ENCODE measurements at regions of chr5 and their contacts with region 1.

Region 1: DNA sequence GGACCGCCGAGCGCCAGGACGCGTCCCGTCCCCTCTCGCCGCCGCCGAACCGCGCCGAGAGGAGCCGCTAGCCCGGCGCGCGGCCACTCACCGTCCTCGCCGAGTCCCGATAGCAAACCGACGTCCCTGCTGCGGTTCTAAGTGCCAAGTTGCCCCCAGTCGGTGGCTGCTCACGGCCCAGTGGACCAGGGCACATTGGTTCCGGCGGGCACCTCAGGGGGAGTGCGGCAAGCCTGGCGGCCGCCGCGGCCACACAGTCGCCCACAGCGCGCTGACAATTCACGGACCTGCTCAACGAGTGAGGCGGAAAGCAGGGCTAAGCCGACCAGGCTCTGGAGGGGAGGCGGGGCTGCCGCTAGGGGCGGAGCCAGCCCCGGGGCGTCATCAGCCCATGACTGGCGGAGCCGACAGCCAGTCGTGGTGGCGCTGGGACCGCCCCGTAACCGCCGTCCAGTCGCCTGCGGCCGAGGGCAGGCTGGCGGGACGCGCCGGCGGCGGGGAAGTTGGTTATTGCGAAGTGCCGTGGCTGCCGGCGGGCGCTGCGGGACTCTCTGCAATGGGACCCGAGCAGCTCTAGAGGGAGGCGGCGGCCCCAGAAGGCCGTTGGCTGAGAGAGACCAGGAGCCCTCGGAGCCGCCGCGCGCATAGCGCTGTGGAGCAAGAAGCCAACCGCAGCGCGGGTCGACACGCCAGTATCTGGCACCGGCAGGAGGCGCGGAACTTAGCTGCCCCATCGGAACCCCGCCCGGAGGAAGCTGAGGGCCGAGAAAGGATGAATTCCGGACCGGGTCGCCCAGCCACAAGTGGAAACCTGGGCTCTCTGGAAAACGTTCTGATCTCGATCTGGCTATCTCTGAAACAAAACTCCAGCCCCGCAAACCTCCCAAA is at the start of gene MARCHF3:
- DNase-seq: peak; percentile 97 to 98 (median 98)
- ATAC-seq: peak; percentile 94
- H3K4me3 ChIP-seq: peak within 1 kb of the TSS; percentile 89
- H3K27ac ChIP-seq: peak within 1 kb of the TSS; percentile 89
- H3K4me1 ChIP-seq: peaks cover 26 to 31% of the 10 kb centered on the region in 2 experiments
- H3K27me3 ChIP-seq: no peaks in the 10 kb centered on the region
- CTCF ChIP-seq: peak; percentile 46 to 57 (median 49); a peak in 5 of 6 replicates
- EP300 ChIP-seq: no peak
- POLR2A ChIP-seq: peak; percentile 97
- RAD21 ChIP-seq: peak; percentile 5 to 33; a peak in 3 of 4 replicates
- polyA plus RNA-seq, gene MARCHF3: 5.6 to 7.6 TPM

Region 2: DNA sequence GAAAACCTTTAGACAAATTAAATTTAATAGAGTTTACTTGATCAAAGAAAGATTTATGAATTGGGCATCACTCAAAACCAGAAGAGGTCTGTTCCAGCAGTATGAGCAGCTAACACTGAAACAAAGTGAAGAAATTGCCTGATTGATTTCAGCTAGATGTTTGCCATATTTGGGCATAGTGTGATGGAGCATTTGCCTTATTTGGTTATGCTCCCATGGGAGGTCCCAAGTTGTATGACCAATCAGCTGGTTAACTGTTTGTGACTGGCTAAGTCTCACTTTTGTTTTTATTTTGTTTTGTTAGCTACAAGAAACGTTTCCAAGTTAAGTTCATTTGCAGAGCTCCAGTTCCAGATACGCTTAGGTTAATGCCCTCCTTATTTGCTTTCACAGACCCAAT is 306.9 kb before region 1 on chr5:
- CTCF ChIA-PET with region 1: no interaction called
- POLR2A ChIA-PET with region 1: no interaction called
- in situ Hi-C with region 1: no loop called
- intact Hi-C with region 1: no loop called
- DNase-seq: no peak
- ATAC-seq: peak; percentile 84
- H3K4me3 ChIP-seq: no peak overlapping the region
- H3K27ac ChIP-seq: no peak overlapping the region
- H3K4me1 ChIP-seq: peaks cover 0 to under 1% of the 10 kb centered on the region in 2 experiments; a peak in 1 of 5 replicates
- H3K27me3 ChIP-seq: no peaks in the 10 kb centered on the region
- CTCF ChIP-seq: no peak
- EP300 ChIP-seq: no peak
- POLR2A ChIP-seq: no peak
- RAD21 ChIP-seq: no peak

Region 3: GRCh38 chr5:126846344-126846743 is 184.2 kb before region 1 on chr5:
- CTCF ChIA-PET with region 1: no interaction called
- POLR2A ChIA-PET with region 1: no interaction called
- in situ Hi-C with region 1: no loop called
- intact Hi-C with region 1: loop called (anchors 5 kb)
- DNase-seq: peak in 1 of 4 experiments; percentile 30
- ATAC-seq: peak; percentile 56
- H3K4me3 ChIP-seq: no peak overlapping the region
- H3K27ac ChIP-seq: no peak overlapping the region
- H3K4me1 ChIP-seq: peaks cover 13 to 31% of the 10 kb centered on the region in 2 experiments; a peak in 4 of 5 replicates
- H3K27me3 ChIP-seq: no peaks in the 10 kb centered on the region
- CTCF ChIP-seq: peak; percentile 29 to 45 (median 38); a peak in 4 of 6 replicates
- EP300 ChIP-seq: no peak
- POLR2A ChIP-seq: no peak
- RAD21 ChIP-seq: peak; percentile 43 to 57

Region 4: GRCh38 chr5:126884269-126884819 is 146.2 kb before region 1 on chr5:
- CTCF ChIA-PET with region 1: no interaction called
- POLR2A ChIA-PET with region 1: interaction called, 4 read pairs
- in situ Hi-C with region 1: no loop called
- intact Hi-C with region 1: loop called (anchors 5 kb)
- DNase-seq: peak; percentile 49 to 95 (median 72)
- ATAC-seq: peak; percentile 92
- H3K4me3 ChIP-seq: no peak overlapping the region
- H3K27ac ChIP-seq: peak overlapping the region; percentile 74
- H3K4me1 ChIP-seq: peaks cover 8 to 53% of the 10 kb centered on the region in 2 experiments
- H3K27me3 ChIP-seq: no peaks in the 10 kb centered on the region
- CTCF ChIP-seq: no peak
- EP300 ChIP-seq: peak; percentile 100
- POLR2A ChIP-seq: 0 out of 2 replicates have a peak, but pooled peaks have one; percentile 25
- RAD21 ChIP-seq: peak; percentile 4 to 35

Region 5: GRCh38 chr5:126998201-126998631 is 32.3 kb before region 1 on chr5:
- CTCF ChIA-PET with region 1: no interaction called
- POLR2A ChIA-PET with region 1: interaction called, 11 read pairs
- in situ Hi-C with region 1: no loop called
- intact Hi-C with region 1: loop called (anchors 1 kb)
- DNase-seq: peak in 3 of 4 experiments; percentile 32 to 82 (median 66)
- ATAC-seq: peak; percentile 90
- H3K4me3 ChIP-seq: no peak overlapping the region; the same call in 1 of the 2 replicates
- H3K27ac ChIP-seq: peak overlapping the region; percentile 86
- H3K4me1 ChIP-seq: peaks cover 7 to 64% of the 10 kb centered on the region in 2 experiments
- H3K27me3 ChIP-seq: no peaks in the 10 kb centered on the region
- CTCF ChIP-seq: peak in 1 of 3 experiments; percentile 29; a peak in 2 of 6 replicates
- EP300 ChIP-seq: peak; percentile 77
- POLR2A ChIP-seq: no peak
- RAD21 ChIP-seq: peak; percentile 23 to 48; a peak in 3 of 4 replicates

Region 6: DNA sequence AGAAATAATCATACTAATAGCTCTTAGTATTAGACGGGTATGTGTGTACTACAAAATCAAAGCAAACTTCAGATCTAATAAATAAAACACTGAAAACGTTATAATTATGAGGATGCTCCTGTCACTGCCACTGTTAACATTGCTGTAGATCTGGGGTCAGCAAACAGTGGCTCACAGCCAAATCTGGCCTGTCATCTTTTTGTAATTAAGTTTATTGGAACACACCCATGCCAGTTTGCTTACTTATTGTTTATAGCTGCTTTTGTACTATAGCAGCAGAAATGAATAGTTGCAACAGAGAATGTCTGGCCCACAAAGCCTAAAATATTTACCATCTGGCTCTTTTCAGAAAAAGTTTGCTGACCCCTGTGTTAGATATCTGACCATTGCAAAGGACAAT is 519.0 kb after region 1 on chr5:
- CTCF ChIA-PET with region 1: no interaction called
- POLR2A ChIA-PET with region 1: no interaction called
- in situ Hi-C with region 1: no loop called
- intact Hi-C with region 1: no loop called
- DNase-seq: no peak
- ATAC-seq: no peak
- H3K4me3 ChIP-seq: no peak overlapping the region
- H3K27ac ChIP-seq: no peak overlapping the region
- H3K4me1 ChIP-seq: no peaks in the 10 kb centered on the region
- H3K27me3 ChIP-seq: no peaks in the 10 kb centered on the region
- CTCF ChIP-seq: no peak
- EP300 ChIP-seq: no peak
- POLR2A ChIP-seq: no peak
- RAD21 ChIP-seq: no peak

Measured in K562 (cell line).